CD4-positive, alpha-beta memory T cell (primary cell): ENCODE measurements at regions of chr20 and their contacts with region 1.

Region 1: DNA sequence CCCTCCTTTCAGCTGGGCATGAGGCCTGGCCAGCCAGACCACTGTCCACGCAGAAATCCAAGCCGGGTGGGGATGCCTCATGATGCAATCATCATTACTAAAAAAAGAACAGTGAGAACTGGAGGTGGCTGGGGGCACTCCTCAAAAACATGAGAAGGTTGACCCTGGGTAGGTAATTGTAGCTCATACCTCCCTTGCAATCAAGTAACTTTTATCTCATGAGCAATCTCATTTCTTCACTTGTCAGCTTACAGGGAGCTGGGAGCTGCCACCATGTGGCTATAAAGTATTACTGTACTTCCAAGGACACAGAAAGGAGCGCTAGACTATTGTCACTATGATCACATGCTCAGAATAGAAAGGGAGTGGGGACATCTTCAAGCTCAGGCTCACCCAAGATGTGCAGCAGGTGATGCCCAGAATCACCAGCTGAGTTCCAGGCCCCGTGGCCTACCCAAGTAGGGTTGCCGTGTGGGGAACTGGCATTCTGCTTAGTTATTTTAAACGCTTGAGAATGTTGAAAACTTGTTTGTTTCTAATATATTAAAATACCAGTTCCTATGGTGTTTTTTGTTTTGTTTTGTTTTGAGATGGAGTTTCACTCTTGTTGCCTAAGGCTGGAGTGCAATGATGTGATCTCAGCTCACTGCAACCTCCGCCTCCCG is 3.0 kb upstream of the CDH26 start:
- DNase-seq: peak in 1 of 5 donors; percentile 0
- H3K4me3 ChIP-seq: no peak overlapping the region
- H3K4me3 Mint-ChIP-seq: no peak overlapping the region
- H3K27ac ChIP-seq: no peak overlapping the region
- H3K27ac Mint-ChIP-seq: peak overlapping the region in 2 of 7 donors; percentile 61 to 63
- H3K4me1 ChIP-seq: no peaks in the 10 kb centered on the region
- H3K4me1 Mint-ChIP-seq: no peaks in the 10 kb centered on the region
- H3K27me3 ChIP-seq: no peaks in the 10 kb centered on the region
- H3K27me3 Mint-ChIP-seq: no peaks in the 10 kb centered on the region

Region 2: GRCh38 chr20:59933849-59934596 is 21.2 kb before region 1 on chr20:
- CTCF ChIA-PET with region 1: interaction called, 120 read pairs
- POLR2A ChIA-PET with region 1: interaction called, 39 read pairs
- intact Hi-C with region 1: no loop called
- DNase-seq: peak; percentile 72 to 82 (median 76)
- H3K4me3 ChIP-seq: peak overlapping the region in 1 of 2 donors; percentile 69
- H3K4me3 Mint-ChIP-seq: peak overlapping the region; percentile 75 to 85 (median 81)
- H3K27ac ChIP-seq: peak overlapping the region; percentile 54
- H3K27ac Mint-ChIP-seq: peak overlapping the region in 6 of 7 donors; percentile 42 to 87 (median 74)
- H3K4me1 ChIP-seq: peaks cover 32% of the 10 kb centered on the region
- H3K4me1 Mint-ChIP-seq: peaks cover 25 to 47% (median 36%) of the 10 kb centered on the region in 4 donors
- H3K27me3 ChIP-seq: no peaks in the 10 kb centered on the region
- H3K27me3 Mint-ChIP-seq: no peaks in the 10 kb centered on the region